ENCODE measurements at regions of chr12 and their contacts with region 1.

Region 1: GRCh38 chr12:21773263-21773741 is 1.2 kb downstream of the KCNJ8 start:
- DNase-seq: peak; percentile 83
- H3K4me3 ChIP-seq: peak overlapping the region; percentile 65 to 71 (median 68)
- H3K27ac ChIP-seq: peak overlapping the region; percentile 85 to 93 (median 90)
- H3K4me1 ChIP-seq: peaks cover 0 to 37% (median 28%) of the 10 kb centered on the region in 4 donors
- H3K27me3 ChIP-seq: no peaks in the 10 kb centered on the region
- CTCF ChIP-seq: peak in 1 of 4 experiments; percentile 24
- EP300 ChIP-seq: no peak
- POLR2A ChIP-seq: no peak

Region 2: GRCh38 chr12:21697904-21698630 is 75.2 kb before region 1 on chr12:
- intact Hi-C with region 1: loop called (anchors 5 kb)
- DNase-seq: no peak
- H3K4me3 ChIP-seq: peak overlapping the region in 1 of 4 donors; percentile 19
- H3K27ac ChIP-seq: no peak overlapping the region
- H3K4me1 ChIP-seq: peaks cover 0 to 5% (median 2%) of the 10 kb centered on the region in 4 donors
- H3K27me3 ChIP-seq: no peaks in the 10 kb centered on the region
- CTCF ChIP-seq: peak; percentile 43 to 71 (median 53)
- EP300 ChIP-seq: no peak
- POLR2A ChIP-seq: no peak

Region 3: DNA sequence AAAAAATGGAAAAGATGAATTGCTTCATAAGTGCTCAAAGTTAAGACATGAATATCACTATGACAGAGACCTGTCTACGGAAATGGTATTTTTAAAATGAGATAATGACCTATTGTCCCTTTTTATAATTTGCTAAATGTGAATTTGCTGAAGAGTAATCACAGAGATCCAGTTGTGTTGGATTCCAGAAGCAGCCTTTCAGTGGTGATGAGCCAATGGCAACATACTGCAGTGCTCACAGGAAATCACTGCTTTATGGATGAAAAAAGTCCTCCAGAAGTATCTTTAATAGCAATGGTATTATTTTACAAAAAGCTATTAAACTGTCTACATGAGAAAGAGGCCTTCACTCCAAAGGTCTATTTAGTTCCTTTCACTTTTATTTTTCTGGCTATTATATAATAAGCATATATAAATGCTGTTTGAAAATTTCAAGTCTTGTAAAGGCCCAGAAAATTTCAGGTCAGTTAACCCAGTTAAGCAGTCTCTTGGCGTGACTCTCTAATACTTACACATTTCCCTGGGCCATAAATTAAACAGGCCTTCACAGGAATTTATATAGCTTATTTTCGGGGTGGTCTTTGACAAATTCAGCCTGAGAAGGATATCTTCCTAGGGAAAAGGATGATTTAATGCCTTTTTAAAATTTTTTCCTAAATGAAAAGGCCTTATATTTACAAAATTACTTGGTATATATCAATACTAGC is 54.2 kb before region 1 on chr12:
- intact Hi-C with region 1: loop called (anchors 5 kb)
- DNase-seq: no peak
- H3K4me3 ChIP-seq: no peak overlapping the region
- H3K27ac ChIP-seq: no peak overlapping the region
- H3K4me1 ChIP-seq: peaks cover 0 to 15% (median 3%) of the 10 kb centered on the region in 4 donors
- H3K27me3 ChIP-seq: no peaks in the 10 kb centered on the region
- CTCF ChIP-seq: no peak
- EP300 ChIP-seq: no peak
- POLR2A ChIP-seq: no peak

Region 4: GRCh38 chr12:21831791-21832344 is 58.6 kb after region 1 on chr12:
- intact Hi-C with region 1: loop called (anchors 5 kb)
- DNase-seq: peak; percentile 89
- H3K4me3 ChIP-seq: no peak overlapping the region
- H3K27ac ChIP-seq: peak overlapping the region; percentile 59 to 74 (median 68)
- H3K4me1 ChIP-seq: peaks cover 0 to 53% (median 28%) of the 10 kb centered on the region in 4 donors
- H3K27me3 ChIP-seq: no peaks in the 10 kb centered on the region
- CTCF ChIP-seq: no peak
- EP300 ChIP-seq: peak in 1 of 4 donors; percentile 54
- POLR2A ChIP-seq: no peak

Region 5: DNA sequence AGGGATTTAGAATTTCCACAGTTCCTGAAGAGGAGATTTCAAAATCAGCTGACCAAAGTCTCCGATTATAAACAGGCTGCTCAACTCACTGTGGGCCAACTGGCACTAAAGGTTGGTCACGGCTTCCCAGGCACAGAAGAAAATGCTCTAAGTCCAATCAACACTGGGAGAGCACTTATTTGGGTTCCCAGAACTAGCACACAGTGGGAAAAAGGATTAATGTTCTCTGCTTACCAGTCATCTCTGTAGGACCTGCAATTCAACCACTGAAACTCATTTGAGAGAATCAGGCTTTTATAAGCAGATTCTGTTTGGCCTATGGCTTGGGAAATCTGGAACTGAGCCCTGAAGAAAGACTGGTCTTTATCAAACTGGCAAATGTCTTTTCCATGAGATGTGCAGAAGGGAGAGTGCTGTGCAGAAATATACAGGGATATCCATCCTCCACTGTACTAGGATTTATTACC is 118.5 kb after region 1 on chr12:
- intact Hi-C with region 1: loop called (anchors 2 kb)
- DNase-seq: peak; percentile 93
- H3K4me3 ChIP-seq: no peak overlapping the region
- H3K27ac ChIP-seq: peak overlapping the region; percentile 73 to 82 (median 76)
- H3K4me1 ChIP-seq: peaks cover 0 to 65% (median 49%) of the 10 kb centered on the region in 4 donors
- H3K27me3 ChIP-seq: no peaks in the 10 kb centered on the region
- CTCF ChIP-seq: no peak
- EP300 ChIP-seq: peak; percentile 7 to 57 (median 34)
- POLR2A ChIP-seq: no peak

Region 6: GRCh38 chr12:21940549-21941505 is 167.5 kb after region 1 on chr12 and contains the start of gene ABCC9:
- intact Hi-C with region 1: loop called (anchors 2 kb)
- DNase-seq: peak; percentile 81
- H3K4me3 ChIP-seq: peak within 1 kb of the TSS; percentile 45 to 61 (median 59)
- H3K27ac ChIP-seq: peak within 1 kb of the TSS; percentile 81 to 89 (median 86)
- H3K4me1 ChIP-seq: peaks cover 0 to 17% (median 14%) of the 10 kb centered on the region in 4 donors
- H3K27me3 ChIP-seq: no peaks in the 10 kb centered on the region
- CTCF ChIP-seq: no peak
- EP300 ChIP-seq: no peak
- POLR2A ChIP-seq: peak; percentile 29 to 33
- total RNA-seq, gene ABCC9: 28.2 to 39.2 (median 34.0) TPM

Region 7: GRCh38 chr12:21989819-21990412 is 216.6 kb after region 1 on chr12:
- intact Hi-C with region 1: loop called (anchors 5 kb)
- DNase-seq: no peak
- H3K4me3 ChIP-seq: no peak overlapping the region
- H3K27ac ChIP-seq: no peak overlapping the region
- H3K4me1 ChIP-seq: no peaks in the 10 kb centered on the region
- H3K27me3 ChIP-seq: no peaks in the 10 kb centered on the region
- CTCF ChIP-seq: peak; percentile 45 to 62 (median 56)
- EP300 ChIP-seq: no peak
- POLR2A ChIP-seq: no peak